Naive thymus-derived CD8-positive, alpha-beta T cell (primary cell): ENCODE measurements at regions of chr16 and their contacts with region 1.

Region 1: DNA sequence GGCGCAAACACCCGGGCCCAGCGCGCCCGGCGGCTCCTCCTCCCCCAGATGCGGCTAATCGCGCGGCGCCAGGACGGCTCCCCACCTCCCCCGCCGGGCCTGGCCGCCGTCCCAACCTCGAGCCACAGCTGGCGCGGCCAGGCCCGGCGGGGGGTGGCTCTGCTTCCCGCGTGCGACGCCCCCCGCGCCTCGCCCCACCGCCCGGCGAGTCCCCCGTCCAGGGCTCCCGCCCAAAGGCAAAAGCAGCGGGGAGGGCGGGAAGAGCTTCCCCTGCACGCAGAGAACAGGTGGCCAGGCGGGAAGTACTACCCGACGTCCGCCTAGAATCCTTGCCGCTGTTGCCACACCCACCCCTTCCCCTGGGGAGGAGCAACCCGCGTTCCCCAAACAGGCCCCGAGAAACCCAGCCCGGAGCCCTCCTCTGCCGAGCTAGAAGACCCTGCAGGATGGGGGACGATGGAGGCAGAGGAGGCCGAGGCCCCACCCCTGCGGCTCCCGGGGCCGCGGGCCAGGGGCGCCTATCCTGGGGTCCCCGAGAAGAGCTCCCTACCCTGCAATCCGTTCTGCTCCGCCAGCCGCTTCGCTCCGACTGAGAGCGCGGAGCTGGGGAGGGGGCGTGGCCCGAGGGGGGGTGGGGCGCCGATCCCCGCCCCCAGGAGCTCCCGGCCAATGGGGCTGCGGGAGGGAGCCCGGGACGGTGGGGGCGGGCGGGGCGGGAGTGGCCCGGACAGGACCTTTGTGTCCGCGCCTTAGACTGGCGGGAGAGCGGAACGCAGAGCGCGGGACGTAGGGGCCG is at the start of gene CARHSP1:
- DNase-seq: peak; percentile 65 to 84 (median 77)
- ATAC-seq: peak; percentile 67 to 71
- H3K4me3 Mint-ChIP-seq: peak within 1 kb of the TSS; percentile 89 to 99 (median 95)
- H3K27ac Mint-ChIP-seq: peak within 1 kb of the TSS; percentile 87 to 95 (median 93)
- H3K4me1 Mint-ChIP-seq: peaks cover 31 to 63% (median 60%) of the 10 kb centered on the region in 4 donors
- H3K27me3 Mint-ChIP-seq: no peaks in the 10 kb centered on the region
- polyA plus RNA-seq, gene CARHSP1: 40.0 to 51.9 (median 48.5) TPM

Region 2: GRCh38 chr16:8797364-8798173 is 71.0 kb before region 1 on chr16 and contains the starts of genes PMM2 and TMEM186:
- POLR2A ChIA-PET with region 1: interaction called, 29 read pairs
- DNase-seq: peak; percentile 88 to 97 (median 94)
- ATAC-seq: peak; percentile 96
- H3K4me3 Mint-ChIP-seq: peak within 1 kb of the TSS; percentile 92 to 98 (median 97)
- H3K27ac Mint-ChIP-seq: peak within 1 kb of the TSS; percentile 92 to 98 (median 95)
- H3K4me1 Mint-ChIP-seq: peaks cover 11 to 63% (median 48%) of the 10 kb centered on the region in 4 donors
- H3K27me3 Mint-ChIP-seq: no peaks in the 10 kb centered on the region
- polyA plus RNA-seq, gene PMM2: 21.4 to 26.0 (median 22.5) TPM
- polyA plus RNA-seq, gene TMEM186: 10.3 to 15.8 (median 14.1) TPM

Region 3: DNA sequence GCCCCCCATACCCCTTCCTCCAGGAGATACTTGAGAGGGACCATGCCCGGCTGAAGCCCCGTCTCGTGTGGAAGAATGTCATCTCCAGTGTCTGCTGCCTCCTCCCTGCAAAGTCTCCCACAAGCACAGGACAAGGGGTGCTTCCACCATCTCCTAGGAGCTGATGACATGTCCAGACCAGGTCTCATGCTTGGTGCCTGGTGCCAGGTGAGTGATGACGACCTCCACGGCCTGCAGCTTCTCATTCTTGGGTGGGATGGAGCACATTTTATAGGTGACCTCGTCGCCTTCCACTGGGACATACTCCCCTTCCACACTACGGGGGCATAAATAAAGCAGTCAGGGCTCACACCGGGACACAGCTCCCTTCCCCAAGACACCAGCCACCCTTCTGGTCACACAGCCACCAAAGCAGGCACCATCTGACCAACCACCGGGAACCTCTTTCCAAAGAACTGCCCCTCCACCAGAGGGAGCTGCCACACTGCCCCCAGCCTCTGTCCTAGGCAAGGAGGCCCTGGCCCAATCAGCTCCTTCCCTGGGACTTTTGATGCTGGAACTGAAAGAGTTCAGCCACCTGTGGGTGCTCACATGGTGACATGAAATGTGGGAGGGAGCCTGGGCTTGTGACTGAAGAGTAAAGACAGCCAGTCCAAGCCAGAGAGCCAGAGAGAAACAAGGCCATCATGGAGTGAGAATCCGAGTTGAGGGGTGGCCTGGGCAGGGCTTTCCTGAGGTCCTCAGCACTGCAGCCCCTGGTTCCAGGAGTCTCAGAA is 13.4 kb before region 1 on chr16:
- POLR2A ChIA-PET with region 1: interaction called, 10 read pairs
- DNase-seq: no peak
- ATAC-seq: no peak
- H3K4me3 Mint-ChIP-seq: peak overlapping the region in 1 of 10 donors; percentile 34
- H3K27ac Mint-ChIP-seq: peak overlapping the region in 9 of 10 donors; percentile 37 to 88 (median 71)
- H3K4me1 Mint-ChIP-seq: peaks cover 32 to 54% (median 42%) of the 10 kb centered on the region in 4 donors
- H3K27me3 Mint-ChIP-seq: no peaks in the 10 kb centered on the region

Region 4: GRCh38 chr16:8894736-8895334 is 26.2 kb after region 1 on chr16:
- POLR2A ChIA-PET with region 1: no interaction called
- DNase-seq: no peak
- ATAC-seq: no peak
- H3K4me3 Mint-ChIP-seq: peak overlapping the region in 1 of 10 donors; percentile 15
- H3K27ac Mint-ChIP-seq: peak overlapping the region in 4 of 10 donors; percentile 18 to 77 (median 55)
- H3K4me1 Mint-ChIP-seq: peaks cover 0 to 11% (median 0%) of the 10 kb centered on the region in 4 donors
- H3K27me3 Mint-ChIP-seq: no peaks in the 10 kb centered on the region